ENCODE measurements at regions of chr4 and their contacts with region 1.

Region 1: GRCh38 chr4:108097990-108098553 is 70.7 kb downstream of the LEF1 start:
- DNase-seq: no peak
- H3K4me3 ChIP-seq: no peak overlapping the region
- H3K27ac ChIP-seq: no peak overlapping the region
- H3K27me3 ChIP-seq: peaks cover 2% of the 10 kb centered on the region
- CTCF ChIP-seq: no peak

Region 2: GRCh38 chr4:108080747-108081146 is 17.3 kb before region 1 on chr4:
- CTCF ChIA-PET with region 1: no interaction called
- POLR2A ChIA-PET with region 1: no interaction called
- DNase-seq: no peak
- H3K4me3 ChIP-seq: no peak overlapping the region
- H3K27ac ChIP-seq: no peak overlapping the region
- H3K27me3 ChIP-seq: peaks cover 3% of the 10 kb centered on the region
- CTCF ChIP-seq: no peak

Region 3: DNA sequence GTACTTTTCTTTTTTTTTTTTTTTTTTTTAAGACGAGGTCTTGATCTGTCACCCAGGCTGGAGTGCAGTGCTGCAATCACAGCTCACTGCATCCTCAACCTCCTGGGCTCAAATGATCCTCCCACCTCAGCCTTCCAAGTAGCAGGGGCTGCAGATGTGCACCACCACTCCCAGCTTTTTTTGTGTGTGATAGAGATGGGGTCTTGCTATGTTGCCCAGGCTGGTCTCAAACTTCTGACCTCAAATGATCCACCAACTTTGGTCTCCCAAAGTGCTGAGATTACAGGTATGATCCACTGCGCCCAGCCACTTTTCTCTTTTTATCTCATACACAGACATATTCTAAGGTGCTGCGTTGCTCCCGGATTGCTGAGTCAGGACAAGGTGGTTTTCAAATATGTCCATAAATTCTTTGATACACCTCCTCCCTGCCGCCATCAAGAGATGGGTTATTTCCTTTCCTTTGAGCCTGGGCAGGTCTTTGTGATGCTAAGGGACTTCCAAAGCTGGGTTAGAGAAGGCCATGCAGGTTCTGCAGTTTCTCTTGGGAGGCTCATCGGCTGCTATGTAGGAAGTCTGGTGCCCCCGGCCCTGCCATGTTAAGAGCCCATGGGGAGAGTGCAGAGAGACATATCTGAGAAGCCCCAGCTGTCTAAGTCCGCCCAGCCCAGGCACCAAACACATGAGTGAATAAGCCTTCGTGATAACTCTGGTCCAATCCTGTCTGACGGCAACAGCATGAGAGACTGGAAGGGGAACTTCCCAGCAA is 1640.2 kb after region 1 on chr4:
- CTCF ChIA-PET with region 1: no interaction called
- POLR2A ChIA-PET with region 1: interaction called, 12 read pairs
- DNase-seq: no peak
- H3K4me3 ChIP-seq: no peak overlapping the region
- H3K27ac ChIP-seq: no peak overlapping the region
- H3K27me3 ChIP-seq: peaks cover 2% of the 10 kb centered on the region
- CTCF ChIP-seq: no peak

Measured in AG04450 (cell line).